Left ventricle myocardium inferior (tissue), 1 donor: ENCODE measurements at regions of chr7 and their contacts with region 1.

Region 1: DNA sequence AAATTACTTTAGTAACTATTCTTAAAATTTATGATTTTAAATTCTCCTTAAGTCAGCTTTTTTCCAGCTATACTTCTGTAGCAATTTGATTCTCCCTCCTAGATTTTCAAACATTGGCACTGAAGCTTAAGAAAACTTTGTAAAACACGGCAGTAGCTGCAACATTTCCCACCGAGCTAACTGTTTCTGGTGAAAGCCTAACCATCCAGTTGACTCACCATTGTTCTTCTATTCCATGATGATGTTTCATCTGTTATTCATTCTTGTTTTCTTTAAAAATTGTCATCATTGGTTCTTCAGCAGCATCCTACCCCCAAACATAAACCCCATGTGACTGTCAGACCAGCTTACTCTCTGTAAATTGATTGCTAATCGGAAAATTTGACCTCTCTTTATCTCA is 312.3 kb downstream of the DGKB start:
- DNase-seq: no peak
- H3K4me3 ChIP-seq: no peak overlapping the region
- H3K27ac ChIP-seq: no peak overlapping the region
- H3K4me1 ChIP-seq: peaks cover 3% of the 10 kb centered on the region
- H3K27me3 ChIP-seq: no peaks in the 10 kb centered on the region
- CTCF ChIP-seq: no peak

Region 2: GRCh38 chr7:13448226-13448625 is 1142.0 kb before region 1 on chr7:
- intact Hi-C with region 1: loop called (anchors 5 kb)
- DNase-seq: no peak
- H3K4me3 ChIP-seq: no peak overlapping the region
- H3K27ac ChIP-seq: no peak overlapping the region
- H3K4me1 ChIP-seq: no peaks in the 10 kb centered on the region
- H3K27me3 ChIP-seq: no peaks in the 10 kb centered on the region
- CTCF ChIP-seq: no peak

Region 3: DNA sequence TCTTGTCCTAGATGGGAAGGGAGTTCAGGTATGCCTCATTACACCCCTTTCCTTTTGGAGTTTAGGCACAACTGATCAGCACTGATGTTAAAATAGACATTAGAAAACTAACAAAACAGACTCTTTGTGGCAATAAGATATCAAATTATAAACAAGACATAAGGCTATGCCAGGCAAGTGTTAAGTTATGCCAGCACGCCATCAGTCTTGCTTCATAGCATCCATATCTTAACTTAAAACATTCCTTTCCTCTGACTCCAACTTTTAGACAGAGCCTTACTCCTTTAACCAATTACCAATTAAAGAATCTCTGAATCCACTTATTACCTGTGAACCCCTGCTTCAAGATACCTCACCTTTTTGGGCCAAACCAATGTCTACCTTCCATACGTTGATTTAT is 474.5 kb before region 1 on chr7:
- intact Hi-C with region 1: no loop called
- DNase-seq: no peak
- H3K4me3 ChIP-seq: no peak overlapping the region
- H3K27ac ChIP-seq: no peak overlapping the region
- H3K4me1 ChIP-seq: no peaks in the 10 kb centered on the region
- H3K27me3 ChIP-seq: no peaks in the 10 kb centered on the region
- CTCF ChIP-seq: no peak